Common myeloid progenitor, CD34-positive (primary cell): ENCODE measurements at regions of chr7 and their contacts with region 1.

Region 1: GRCh38 chr7:121395961-121396757 is at the start of gene FAM3C:
- DNase-seq: peak; percentile 81 to 86 (median 82)
- H3K4me3 ChIP-seq: peak within 1 kb of the TSS; percentile 80 to 94 (median 89)
- H3K27ac ChIP-seq: peak within 1 kb of the TSS in 1 of 2 experiments; percentile 74
- H3K4me1 ChIP-seq: peaks cover 3 to 9% (median 4%) of the 10 kb centered on the region in 4 experiments
- H3K27me3 ChIP-seq: no peaks in the 10 kb centered on the region

Region 2: DNA sequence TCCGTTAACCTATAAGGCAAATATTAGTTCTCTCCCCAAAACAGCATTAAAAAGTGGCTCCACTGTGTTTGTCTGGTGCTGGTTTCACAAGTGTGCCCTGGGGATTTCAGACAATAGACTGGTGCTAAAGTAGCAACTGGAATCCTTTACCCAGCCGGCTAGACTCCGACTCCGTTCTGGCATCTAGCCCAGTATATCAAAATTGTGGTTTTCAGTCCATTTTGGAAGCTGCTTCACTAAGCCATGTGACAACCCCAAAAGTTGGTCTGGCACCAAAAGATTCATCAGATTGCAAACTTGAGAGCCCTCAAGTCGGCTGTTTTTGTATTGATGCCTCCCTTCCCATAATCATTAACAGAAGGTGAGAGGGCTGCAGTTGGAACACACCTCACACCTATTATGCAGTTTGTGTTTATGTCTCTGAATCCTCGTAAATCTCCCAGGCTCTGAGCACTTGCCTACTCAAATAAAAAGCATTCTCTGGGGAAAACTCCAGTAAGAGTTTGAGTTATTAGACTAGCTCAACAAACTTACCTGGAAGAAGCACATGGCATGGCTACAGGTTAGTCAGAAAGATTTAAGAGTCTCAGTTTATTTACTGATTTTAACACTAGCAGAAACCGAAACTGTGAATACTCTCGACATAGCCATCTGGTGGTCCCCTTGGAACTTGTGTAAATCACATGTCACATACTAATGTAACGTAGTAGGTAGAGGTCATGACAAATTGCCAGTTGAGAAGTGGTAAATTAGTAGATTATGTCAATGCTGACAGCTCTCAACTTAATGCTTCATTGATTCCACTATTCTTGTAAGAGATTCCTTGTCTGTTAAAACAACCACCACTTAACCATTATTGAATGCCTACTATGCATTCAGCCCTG is 82.1 kb before region 1 on chr7:
- CTCF ChIA-PET with region 1: no interaction called
- POLR2A ChIA-PET with region 1: no interaction called
- DNase-seq: peak in 1 of 3 donors; percentile 7
- H3K4me3 ChIP-seq: no peak overlapping the region
- H3K27ac ChIP-seq: no peak overlapping the region
- H3K4me1 ChIP-seq: no peaks in the 10 kb centered on the region
- H3K27me3 ChIP-seq: peaks cover 0 to 5% (median 2%) of the 10 kb centered on the region in 5 experiments

Region 3: GRCh38 chr7:121372376-121373010 is 23.7 kb before region 1 on chr7:
- CTCF ChIA-PET with region 1: interaction called, 67 read pairs
- POLR2A ChIA-PET with region 1: interaction called, 5 read pairs
- DNase-seq: peak in 2 of 3 donors; percentile 12 to 28
- H3K4me3 ChIP-seq: peak overlapping the region in 1 of 7 experiments; percentile 28
- H3K27ac ChIP-seq: peak overlapping the region in 1 of 2 experiments; percentile 38
- H3K4me1 ChIP-seq: peaks cover 4 to 13% (median 10%) of the 10 kb centered on the region in 4 experiments
- H3K27me3 ChIP-seq: no peaks in the 10 kb centered on the region

Region 4: DNA sequence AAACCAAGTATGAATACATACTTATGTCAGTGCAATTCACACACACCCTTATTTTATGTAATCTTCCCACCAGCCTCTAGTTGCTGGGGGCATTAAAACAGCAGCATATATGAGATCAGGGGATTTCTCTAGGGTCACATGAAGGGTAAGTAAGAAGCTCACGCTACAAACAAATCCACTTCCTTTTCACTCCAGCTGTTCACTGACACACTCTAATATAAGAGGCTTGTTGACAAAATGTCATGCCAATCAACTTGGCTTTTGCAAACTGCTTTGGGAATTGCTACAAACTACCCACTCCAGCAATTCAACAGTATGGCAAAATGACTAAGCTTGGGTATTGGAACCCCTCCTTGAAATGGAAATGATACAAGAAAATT is 10.4 kb before region 1 on chr7:
- CTCF ChIA-PET with region 1: interaction called, 92 read pairs
- POLR2A ChIA-PET with region 1: interaction called, 6 read pairs
- DNase-seq: peak in 2 of 3 donors; percentile 85 to 92
- H3K4me3 ChIP-seq: no peak overlapping the region
- H3K27ac ChIP-seq: no peak overlapping the region
- H3K4me1 ChIP-seq: peaks cover 5 to 54% (median 20%) of the 10 kb centered on the region in 4 experiments
- H3K27me3 ChIP-seq: no peaks in the 10 kb centered on the region

Region 5: GRCh38 chr7:121420979-121421378 is 24.8 kb after region 1 on chr7:
- CTCF ChIA-PET with region 1: no interaction called
- POLR2A ChIA-PET with region 1: no interaction called
- DNase-seq: no peak
- H3K4me3 ChIP-seq: no peak overlapping the region
- H3K27ac ChIP-seq: no peak overlapping the region
- H3K4me1 ChIP-seq: no peaks in the 10 kb centered on the region
- H3K27me3 ChIP-seq: no peaks in the 10 kb centered on the region